ENCODE measurements at regions of chr14 and their contacts with region 1.

Region 1: DNA sequence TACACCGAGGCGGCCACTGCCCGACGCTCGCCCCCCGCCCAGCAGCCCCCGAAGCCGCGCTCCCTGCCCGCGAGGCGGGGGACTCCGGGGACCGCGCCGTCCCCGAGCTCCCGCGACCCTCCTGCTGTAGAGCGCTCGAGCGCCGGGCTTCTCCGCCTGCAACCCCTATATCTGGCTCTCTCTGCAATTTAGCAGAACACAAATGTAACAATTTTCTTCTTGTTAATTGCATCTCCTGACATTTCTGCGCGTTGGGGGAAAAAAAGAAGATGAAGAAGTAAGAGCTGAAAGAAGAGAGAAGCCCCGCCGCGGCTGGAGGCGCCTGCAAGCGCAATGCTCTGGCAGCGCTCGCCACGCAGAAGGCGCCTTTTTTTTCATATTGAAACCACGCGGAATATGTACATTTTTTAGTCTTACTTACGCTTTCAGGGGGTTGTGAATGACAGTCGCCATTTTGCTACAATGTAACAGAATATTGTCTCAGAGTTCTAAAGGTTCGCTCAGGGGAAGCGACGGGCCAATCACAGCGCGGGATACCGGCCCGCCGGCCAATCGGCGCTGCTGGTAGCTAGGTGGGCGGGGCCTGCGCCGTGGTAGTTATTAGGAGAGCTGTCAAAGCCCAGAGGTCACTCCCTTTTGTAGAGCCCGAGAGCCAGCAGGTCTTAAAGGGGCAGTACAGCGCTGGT is at the start of gene DPF3:
- DNase-seq: peak; percentile 91
- ATAC-seq: peak; percentile 98
- H3K4me3 Mint-ChIP-seq: peak within 1 kb of the TSS; percentile 98
- H3K27ac Mint-ChIP-seq: peak within 1 kb of the TSS; percentile 83
- H3K4me1 Mint-ChIP-seq: peaks cover 35% of the 10 kb centered on the region
- H3K27me3 Mint-ChIP-seq: peaks cover 3% of the 10 kb centered on the region
- CTCF ChIP-seq: no peak
- total RNA-seq, gene DPF3: 3.5 and 4.3 TPM in 2 replicates

Region 2: DNA sequence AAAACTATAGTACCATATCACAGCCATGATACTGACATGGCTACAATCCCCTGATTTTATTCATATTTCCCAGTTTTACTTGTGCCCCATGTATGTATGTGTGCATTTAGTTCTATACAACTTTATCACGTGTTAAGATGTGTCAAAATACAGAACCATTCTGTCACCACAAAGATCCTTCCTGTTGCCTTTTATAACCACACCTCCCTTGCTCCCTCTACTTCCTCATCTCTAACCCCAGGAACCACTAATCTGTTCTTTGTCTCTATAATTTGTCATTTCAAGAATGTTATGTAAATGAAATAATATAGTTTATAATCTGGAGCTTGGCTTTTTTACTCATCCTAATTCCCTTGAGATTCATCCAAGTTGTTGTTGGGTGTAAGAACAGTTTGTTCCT is 358.3 kb before region 1 on chr14:
- CTCF ChIA-PET with region 1: no interaction called
- POLR2A ChIA-PET with region 1: no interaction called
- intact Hi-C with region 1: loop called (anchors 1 kb)
- DNase-seq: no peak
- ATAC-seq: peak; percentile 90
- H3K4me3 Mint-ChIP-seq: peak overlapping the region; percentile 49
- H3K27ac Mint-ChIP-seq: peak overlapping the region; percentile 2
- H3K4me1 Mint-ChIP-seq: peaks cover 85% of the 10 kb centered on the region
- H3K27me3 Mint-ChIP-seq: no peaks in the 10 kb centered on the region
- CTCF ChIP-seq: no peak

Region 3: DNA sequence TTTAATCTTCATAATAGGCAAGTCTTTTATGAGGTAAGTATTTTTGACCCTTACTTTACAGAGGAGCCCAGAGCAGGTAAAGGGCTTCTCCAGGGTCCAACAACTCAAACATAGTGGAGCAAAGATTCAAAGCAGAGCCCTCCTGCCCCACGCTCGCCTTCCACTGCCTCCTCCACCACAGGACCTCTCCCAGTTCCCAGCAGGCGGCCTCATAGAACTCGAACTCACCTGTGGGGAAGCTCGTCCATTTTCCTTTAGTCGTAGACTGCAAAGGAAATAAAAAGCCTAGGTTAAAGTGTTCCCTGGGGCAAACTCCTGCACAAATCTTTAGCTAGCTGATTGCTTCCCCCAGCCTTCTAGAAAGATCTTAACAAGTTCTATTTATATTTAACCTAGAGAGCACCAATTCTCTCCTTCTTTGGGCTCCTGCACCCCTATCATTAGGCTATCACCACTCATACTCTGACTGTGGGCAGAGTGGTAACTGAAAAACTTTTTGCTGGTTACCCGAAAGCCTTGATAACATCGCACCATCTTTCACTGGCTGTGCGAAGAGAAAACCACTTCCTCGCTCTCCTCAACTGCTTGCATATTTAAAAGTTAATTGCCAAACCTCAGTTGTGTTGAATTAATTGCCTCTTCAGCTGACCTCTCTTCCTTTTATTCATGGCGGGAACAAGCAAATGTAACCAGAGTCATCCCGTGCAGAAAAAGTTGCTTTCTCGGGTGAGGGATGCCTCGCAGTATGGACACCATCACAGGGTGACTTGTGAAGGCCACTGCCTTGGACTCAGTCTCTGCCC is 299.5 kb before region 1 on chr14:
- CTCF ChIA-PET with region 1: no interaction called
- POLR2A ChIA-PET with region 1: no interaction called
- intact Hi-C with region 1: loop called (anchors 5 kb)
- DNase-seq: no peak
- ATAC-seq: no peak
- H3K4me3 Mint-ChIP-seq: peak overlapping the region; percentile 21
- H3K27ac Mint-ChIP-seq: no peak overlapping the region
- H3K4me1 Mint-ChIP-seq: peaks cover 58% of the 10 kb centered on the region
- H3K27me3 Mint-ChIP-seq: no peaks in the 10 kb centered on the region
- CTCF ChIP-seq: no peak

Region 4: GRCh38 chr14:72679536-72680151 is 214.1 kb before region 1 on chr14:
- CTCF ChIA-PET with region 1: no interaction called
- POLR2A ChIA-PET with region 1: no interaction called
- intact Hi-C with region 1: loop called (anchors 5 kb)
- DNase-seq: no peak
- ATAC-seq: no peak
- H3K4me3 Mint-ChIP-seq: no peak overlapping the region
- H3K27ac Mint-ChIP-seq: no peak overlapping the region
- H3K4me1 Mint-ChIP-seq: peaks cover 44% of the 10 kb centered on the region
- H3K27me3 Mint-ChIP-seq: no peaks in the 10 kb centered on the region
- CTCF ChIP-seq: no peak

Region 5: DNA sequence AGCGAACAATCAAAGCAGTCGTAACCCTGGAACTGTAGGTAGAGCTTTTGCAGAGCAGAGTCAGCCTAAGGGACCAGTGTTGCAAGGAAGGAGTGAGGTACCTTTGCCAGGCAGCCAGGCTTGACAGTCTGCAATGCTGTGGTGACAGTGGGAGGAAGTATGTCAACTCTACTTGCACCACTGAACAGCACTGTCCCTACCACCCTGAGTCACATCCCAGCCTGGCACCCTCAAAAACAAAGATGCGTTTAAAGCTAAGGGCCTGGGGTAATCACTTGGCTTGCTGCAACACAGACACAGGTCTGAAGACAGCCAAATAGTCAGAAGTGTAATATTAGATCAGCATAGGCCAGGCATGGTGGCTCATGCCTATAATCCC is 141.8 kb before region 1 on chr14:
- CTCF ChIA-PET with region 1: interaction called, 3 read pairs
- POLR2A ChIA-PET with region 1: no interaction called
- intact Hi-C with region 1: loop called (anchors 10 kb)
- DNase-seq: no peak
- ATAC-seq: peak; percentile 99
- H3K4me3 Mint-ChIP-seq: no peak overlapping the region
- H3K27ac Mint-ChIP-seq: no peak overlapping the region
- H3K4me1 Mint-ChIP-seq: peaks cover 19% of the 10 kb centered on the region
- H3K27me3 Mint-ChIP-seq: no peaks in the 10 kb centered on the region
- CTCF ChIP-seq: no peak

Region 6: DNA sequence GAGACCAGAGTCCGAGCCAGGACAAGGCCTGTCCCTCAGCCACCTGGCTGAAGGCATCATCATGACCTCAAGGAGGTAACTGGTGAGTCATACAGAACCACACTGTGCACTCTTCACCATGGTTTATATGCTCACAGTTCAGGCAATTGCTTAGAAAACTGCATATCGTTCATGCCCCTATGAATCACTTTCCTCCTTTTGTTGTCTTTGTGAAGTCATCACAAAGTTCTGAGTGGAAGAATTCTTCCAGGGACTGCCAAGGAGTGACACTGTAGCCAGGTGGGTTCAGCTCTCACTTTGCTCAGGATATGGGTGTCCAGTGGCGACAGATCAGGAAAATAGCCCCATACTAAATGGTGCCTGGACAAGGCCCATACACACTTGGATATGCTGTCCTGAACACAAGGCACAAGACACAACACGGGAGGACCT is 92.4 kb before region 1 on chr14:
- CTCF ChIA-PET with region 1: no interaction called
- POLR2A ChIA-PET with region 1: no interaction called
- intact Hi-C with region 1: no loop called
- DNase-seq: no peak
- ATAC-seq: no peak
- H3K4me3 Mint-ChIP-seq: no peak overlapping the region
- H3K27ac Mint-ChIP-seq: no peak overlapping the region
- H3K4me1 Mint-ChIP-seq: peaks cover 2% of the 10 kb centered on the region
- H3K27me3 Mint-ChIP-seq: no peaks in the 10 kb centered on the region
- CTCF ChIP-seq: no peak

Region 7: DNA sequence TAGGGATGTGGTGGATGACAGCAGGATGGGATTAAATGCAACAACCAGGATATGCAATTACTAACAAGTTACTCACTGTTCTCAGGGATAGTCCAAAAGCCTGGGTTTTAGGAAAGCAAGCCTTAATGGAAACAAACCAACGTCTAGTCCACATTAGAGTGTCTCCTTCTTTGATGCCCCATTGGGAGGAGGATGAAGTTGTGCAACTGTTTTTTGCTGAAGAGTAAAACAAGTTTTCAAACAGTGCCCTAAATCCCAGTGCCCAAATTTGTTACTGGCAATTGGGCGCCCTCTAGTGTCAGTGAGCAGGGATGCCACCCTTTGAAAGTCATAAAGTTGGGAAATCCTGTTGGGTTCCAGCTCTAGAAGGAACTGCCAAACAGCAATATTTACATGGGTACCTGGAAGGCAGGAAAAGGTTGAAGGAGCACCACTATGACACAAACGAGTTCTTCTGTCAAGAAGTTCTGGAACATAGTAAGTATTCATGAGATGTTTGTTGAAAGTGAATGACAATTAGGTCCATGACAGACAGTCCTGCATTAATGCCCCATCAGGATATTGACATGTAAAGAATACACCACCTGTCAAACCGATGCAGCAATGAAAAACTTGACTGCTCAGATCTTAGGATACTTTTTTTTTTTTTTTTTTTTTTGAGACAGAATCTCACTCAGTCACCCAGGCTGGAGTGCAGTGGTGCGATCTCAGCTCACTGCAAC is 11.2 kb after region 1 on chr14:
- CTCF ChIA-PET with region 1: interaction called, 18 read pairs
- POLR2A ChIA-PET with region 1: no interaction called
- intact Hi-C with region 1: loop called (anchors 1 kb)
- DNase-seq: no peak
- ATAC-seq: peak; percentile 79
- H3K4me3 Mint-ChIP-seq: no peak overlapping the region
- H3K27ac Mint-ChIP-seq: no peak overlapping the region
- H3K4me1 Mint-ChIP-seq: peaks cover 17% of the 10 kb centered on the region
- H3K27me3 Mint-ChIP-seq: no peaks in the 10 kb centered on the region
- CTCF ChIP-seq: no peak